ENCODE measurements at regions of chr11 and their contacts with region 1.

Region 1: DNA sequence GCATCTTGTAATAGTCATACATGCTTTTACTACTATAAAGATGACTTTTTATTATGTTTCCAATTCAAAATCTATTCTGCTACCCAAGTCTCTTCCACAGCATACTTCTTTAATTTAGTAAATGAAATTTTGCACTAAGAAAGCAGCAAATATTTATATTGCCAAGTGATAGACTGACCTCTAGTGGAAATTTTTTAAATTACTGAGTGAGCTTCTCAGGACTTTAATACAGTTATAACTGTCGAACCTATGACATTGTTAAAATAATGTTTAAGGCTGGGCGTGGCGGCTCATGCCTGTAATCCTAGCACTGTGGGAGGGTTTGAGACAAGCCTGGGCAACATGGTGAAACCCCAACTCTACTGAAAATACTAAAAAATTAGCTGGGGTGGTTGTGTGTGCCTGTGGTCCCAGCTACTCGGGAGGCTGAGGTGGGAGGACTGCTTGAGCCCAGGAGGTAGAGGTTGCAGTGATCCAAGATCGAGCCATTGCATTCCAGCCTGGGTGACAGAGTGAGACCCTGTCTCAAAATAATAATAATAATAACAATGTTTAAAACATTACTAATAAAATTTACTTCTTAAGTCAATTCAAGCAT is 27.3 kb downstream of the STK33 start:
- DNase-seq: no peak
- ATAC-seq: peak in 1 of 2 donors; percentile 52

Region 2: GRCh38 chr11:7536100-7536499 is 1030.6 kb before region 1 on chr11:
- intact Hi-C with region 1: no loop called
- DNase-seq: no peak
- ATAC-seq: peak in 1 of 2 donors; percentile 26

Region 3: GRCh38 chr11:8338138-8338537 is 228.6 kb before region 1 on chr11:
- intact Hi-C with region 1: loop called (anchors 2 to 10 kb)
- DNase-seq: peak; percentile 37
- ATAC-seq: peak in 1 of 2 donors; percentile 70

Region 4: DNA sequence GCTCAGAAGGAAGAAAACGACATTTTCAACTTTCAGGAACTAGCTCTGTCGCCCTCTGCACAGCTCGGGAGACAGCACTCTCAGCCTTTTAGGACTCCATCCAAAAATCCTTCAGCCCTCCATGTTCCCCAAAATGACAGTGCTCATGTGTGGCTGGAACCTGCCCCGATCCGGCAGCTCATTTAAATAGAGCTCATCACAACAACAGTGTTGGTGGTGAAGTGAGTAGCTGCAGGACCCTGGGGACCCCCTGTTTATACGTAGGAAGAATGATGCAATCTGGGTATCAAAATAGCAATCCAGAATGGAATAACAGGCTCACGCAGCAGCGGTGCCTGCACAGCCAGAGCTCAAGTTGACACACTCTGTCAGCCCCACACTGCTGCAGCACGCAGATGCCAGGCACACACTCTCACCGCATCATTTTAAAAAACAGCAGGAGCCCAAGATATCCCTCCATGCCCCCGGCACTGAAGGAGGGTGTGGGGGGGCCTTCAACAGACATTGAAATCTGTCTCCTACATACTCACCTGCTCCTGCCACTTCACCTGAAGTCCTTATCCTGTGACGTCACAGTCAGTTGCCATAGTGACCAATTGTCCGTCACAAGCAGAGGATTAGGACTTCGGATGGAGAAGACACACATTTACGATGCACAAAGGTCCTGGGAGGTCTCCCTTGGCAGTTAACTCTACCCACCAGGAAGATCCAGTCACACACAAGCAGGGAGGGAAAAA is 91.8 kb after region 1 on chr11:
- intact Hi-C with region 1: no loop called
- DNase-seq: no peak
- ATAC-seq: peak; percentile 27 to 65

Measured in left cardiac atrium (tissue), 4 donors.